ENCODE measurements at regions of chr5 and their contacts with region 1.

Region 1: DNA sequence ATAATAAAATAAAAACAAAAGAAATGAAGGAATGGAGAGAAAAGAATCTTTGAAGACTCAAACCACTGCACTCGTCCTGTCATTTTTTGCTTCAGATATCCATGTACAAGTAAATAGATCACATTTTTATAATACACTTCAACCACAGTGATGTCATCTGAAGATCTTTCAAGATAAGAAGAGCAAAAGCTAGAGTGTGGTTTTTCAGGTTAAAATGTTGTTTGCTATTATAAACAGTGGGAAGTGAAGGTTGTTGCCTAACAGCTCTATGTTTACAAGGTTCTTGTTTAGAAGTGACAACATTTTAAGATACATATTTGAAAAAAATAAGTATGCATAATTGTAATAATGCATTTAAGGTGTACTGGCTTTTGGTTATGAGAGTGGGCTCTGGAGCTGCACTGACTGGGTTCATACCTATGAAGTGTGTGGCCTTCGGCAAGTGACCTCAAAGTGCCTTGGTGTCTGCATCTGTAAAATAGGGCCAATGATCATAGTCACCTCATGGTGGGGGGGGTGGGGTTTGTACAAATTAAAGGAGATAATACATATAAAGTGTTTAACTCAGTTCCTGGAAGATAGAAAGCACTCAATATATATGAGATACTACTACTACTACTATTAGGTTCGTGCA is 45.5 kb upstream of the IL7R start:
- DNase-seq: no peak
- H3K4me3 Mint-ChIP-seq: peak overlapping the region; percentile 70
- H3K27ac Mint-ChIP-seq: peak overlapping the region; percentile 98
- H3K4me1 Mint-ChIP-seq: peaks cover 56% of the 10 kb centered on the region
- H3K27me3 Mint-ChIP-seq: no peaks in the 10 kb centered on the region

Region 2: GRCh38 chr5:35248843-35249780 is 562.1 kb before region 1 on chr5:
- intact Hi-C with region 1: no loop called
- DNase-seq: no peak
- H3K4me3 Mint-ChIP-seq: no peak overlapping the region
- H3K27ac Mint-ChIP-seq: no peak overlapping the region
- H3K4me1 Mint-ChIP-seq: no peaks in the 10 kb centered on the region
- H3K27me3 Mint-ChIP-seq: peaks cover 2% of the 10 kb centered on the region

Region 3: GRCh38 chr5:35799753-35800152 is 11.5 kb before region 1 on chr5:
- intact Hi-C with region 1: loop called (anchors 1 kb)
- DNase-seq: no peak
- H3K4me3 Mint-ChIP-seq: no peak overlapping the region
- H3K27ac Mint-ChIP-seq: no peak overlapping the region
- H3K4me1 Mint-ChIP-seq: peaks cover 70% of the 10 kb centered on the region
- H3K27me3 Mint-ChIP-seq: no peaks in the 10 kb centered on the region